ENCODE measurements at regions of chr9 and their contacts with region 1.

Region 1: DNA sequence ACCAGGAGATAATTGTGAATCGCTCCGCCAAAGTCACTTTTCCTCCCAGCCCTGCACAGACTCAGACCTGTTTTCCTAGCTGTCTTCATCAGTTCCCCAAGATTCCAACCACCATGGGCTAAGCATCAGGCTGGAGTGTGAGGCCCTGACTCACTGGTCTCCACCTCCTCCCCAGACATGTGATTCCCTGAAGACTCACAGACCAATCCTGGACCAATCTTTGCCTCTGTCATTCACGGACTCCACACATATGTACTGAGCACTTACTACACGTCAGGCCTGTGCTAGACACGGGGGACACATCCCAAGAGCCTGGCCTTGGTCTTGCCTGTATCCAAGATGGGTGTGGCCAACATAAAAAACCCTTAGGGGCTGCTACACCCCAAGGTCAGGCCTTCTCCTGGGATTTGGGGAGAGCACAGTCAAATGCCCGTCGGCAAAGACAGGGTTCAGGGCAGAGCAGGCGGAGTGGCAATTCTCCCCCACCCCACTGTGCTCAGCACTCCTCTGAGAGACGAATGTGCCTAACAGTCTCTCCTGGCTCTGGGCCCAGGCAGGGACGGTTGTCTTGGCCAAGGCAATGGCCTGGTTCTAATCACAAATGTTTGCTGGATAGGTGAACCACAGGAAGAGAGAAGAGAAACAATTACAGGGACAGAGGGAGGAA is 11.9 kb downstream of the EEIG1 start:
- DNase-seq: peak; percentile 61
- H3K4me3 ChIP-seq: no peak overlapping the region
- H3K27ac ChIP-seq: peak overlapping the region; percentile 90
- H3K27me3 ChIP-seq: no peaks in the 10 kb centered on the region
- CTCF ChIP-seq: no peak

Region 2: DNA sequence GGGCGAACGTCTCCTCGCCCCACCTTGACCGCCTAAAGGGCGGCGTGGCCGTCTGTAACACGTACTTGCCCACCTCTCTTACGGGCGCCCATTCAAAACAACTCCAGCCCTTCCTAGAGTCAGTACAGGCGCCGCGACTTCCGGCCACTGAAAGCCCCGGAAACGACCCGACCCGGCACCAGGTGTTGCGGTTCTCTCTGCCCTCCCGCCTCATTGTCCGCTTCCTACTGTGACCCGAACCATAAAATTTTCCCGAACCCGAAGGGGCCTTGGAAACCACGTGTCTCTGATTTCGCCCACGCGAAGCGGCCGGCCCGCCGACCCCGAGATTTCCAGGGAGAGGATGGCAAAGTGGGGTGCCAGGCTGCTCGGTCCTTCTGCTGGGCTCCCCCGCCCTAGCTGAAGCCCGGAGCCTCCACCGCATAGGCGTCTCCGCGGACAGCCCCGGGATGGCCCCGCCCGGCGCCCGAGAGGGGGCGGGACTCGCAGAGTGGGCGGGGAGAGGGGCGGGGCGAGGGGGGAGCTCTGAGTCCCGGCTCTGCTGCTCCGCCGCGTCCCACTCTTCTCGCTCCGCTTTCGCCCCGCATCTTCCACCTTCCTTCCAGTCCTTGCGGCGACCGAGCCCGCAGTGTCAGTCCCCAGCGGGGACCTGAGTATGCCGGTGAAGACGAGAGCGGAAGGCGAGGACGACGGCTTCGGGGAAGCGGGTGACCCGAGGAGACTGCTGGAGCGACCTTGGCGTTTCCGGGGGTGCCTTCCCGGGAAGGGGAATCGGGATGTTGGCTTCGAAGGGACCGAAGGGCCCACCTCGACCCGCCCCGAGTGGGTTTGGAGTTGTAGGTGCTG is 159.4 kb after region 1 on chr9:
- CTCF ChIA-PET with region 1: interaction called, 10 read pairs
- POLR2A ChIA-PET with region 1: no interaction called
- DNase-seq: peak; percentile 77
- H3K4me3 ChIP-seq: peak overlapping the region; percentile 90
- H3K27ac ChIP-seq: peak overlapping the region; percentile 92
- H3K27me3 ChIP-seq: peaks cover 4% of the 10 kb centered on the region
- CTCF ChIP-seq: no peak

Measured in AG04450 (cell line).